A549 (cell line): ENCODE measurements at regions of chr17 and their contacts with region 1.

Region 1: GRCh38 chr17:77068915-77069314 is 71.9 kb upstream of the SEC14L1 start:
- DNase-seq: no peak
- ATAC-seq: peak in 1 of 2 experiments; percentile 21; a peak in 2 of 6 replicates
- H3K4me3 ChIP-seq: no peak overlapping the region
- H3K27ac ChIP-seq: peak overlapping the region in 1 of 2 experiments; percentile 6; a peak in 1 of 6 replicates
- H3K4me1 ChIP-seq: peaks cover 5% of the 10 kb centered on the region; the same call in 1 of the 3 replicates
- CTCF ChIP-seq: no peak
- EP300 ChIP-seq: no peak
- POLR2A ChIP-seq: no peak
- RAD21 ChIP-seq: no peak

Region 2: DNA sequence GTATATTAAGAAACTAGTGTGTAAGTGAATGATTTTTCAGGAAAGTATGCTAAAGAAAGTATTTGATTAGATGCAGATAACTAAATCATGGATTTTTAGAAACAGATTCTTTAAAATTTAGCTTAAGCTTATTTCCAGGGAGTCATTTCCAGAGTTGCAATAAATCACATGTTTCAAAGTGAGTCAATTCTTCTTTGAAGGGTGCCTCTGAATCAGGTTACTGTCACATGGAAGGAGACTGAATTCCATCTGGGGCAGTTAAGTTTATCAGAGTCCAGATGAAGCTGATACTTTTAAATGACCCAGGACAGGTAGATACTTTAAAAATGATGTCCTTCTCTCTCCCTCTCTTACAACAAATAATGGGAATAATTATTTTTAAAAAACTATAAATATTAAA is 326.0 kb before region 1 on chr17:
- CTCF ChIA-PET with region 1: interaction called, 10 read pairs
- POLR2A ChIA-PET with region 1: no interaction called
- DNase-seq: no peak
- ATAC-seq: no peak
- H3K4me3 ChIP-seq: no peak overlapping the region
- H3K27ac ChIP-seq: no peak overlapping the region
- H3K4me1 ChIP-seq: peaks cover 10% of the 10 kb centered on the region; the same call in 1 of the 3 replicates
- CTCF ChIP-seq: no peak
- EP300 ChIP-seq: no peak
- POLR2A ChIP-seq: no peak
- RAD21 ChIP-seq: no peak

Region 3: DNA sequence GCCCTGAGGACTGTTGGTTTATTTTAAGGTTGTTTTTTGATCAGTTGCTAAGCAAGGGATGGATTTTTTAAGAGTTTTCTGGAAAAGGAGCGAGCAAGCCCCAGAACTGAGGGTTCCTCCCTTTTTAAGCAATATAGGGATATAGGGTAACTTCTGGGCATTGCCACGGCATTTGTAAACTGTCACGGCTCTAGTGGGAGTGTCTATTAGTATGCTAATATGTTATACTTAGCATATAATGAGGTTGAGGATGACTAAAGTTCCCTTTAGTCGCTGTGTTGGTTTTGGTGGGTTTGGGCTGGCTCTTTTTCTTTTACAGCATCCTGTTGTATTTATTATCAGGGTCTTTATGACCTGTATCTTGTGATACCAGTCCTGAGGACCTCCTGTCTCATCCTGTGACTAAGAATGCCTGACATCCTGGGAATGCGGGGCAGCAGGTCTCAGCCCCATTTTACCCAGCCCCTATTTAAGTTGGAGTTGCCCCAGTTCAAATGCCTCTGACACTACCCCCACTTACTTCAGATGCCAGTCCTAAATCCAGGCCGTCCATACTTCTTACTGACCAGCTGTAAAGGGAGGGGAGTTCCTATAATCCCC is 271.6 kb before region 1 on chr17:
- CTCF ChIA-PET with region 1: interaction called, 12 read pairs
- POLR2A ChIA-PET with region 1: no interaction called
- DNase-seq: no peak
- ATAC-seq: no peak
- H3K4me3 ChIP-seq: no peak overlapping the region
- H3K27ac ChIP-seq: no peak overlapping the region
- H3K4me1 ChIP-seq: peaks cover 6% of the 10 kb centered on the region; the same call in 1 of the 3 replicates
- CTCF ChIP-seq: no peak
- EP300 ChIP-seq: no peak
- POLR2A ChIP-seq: no peak
- RAD21 ChIP-seq: no peak

Region 4: DNA sequence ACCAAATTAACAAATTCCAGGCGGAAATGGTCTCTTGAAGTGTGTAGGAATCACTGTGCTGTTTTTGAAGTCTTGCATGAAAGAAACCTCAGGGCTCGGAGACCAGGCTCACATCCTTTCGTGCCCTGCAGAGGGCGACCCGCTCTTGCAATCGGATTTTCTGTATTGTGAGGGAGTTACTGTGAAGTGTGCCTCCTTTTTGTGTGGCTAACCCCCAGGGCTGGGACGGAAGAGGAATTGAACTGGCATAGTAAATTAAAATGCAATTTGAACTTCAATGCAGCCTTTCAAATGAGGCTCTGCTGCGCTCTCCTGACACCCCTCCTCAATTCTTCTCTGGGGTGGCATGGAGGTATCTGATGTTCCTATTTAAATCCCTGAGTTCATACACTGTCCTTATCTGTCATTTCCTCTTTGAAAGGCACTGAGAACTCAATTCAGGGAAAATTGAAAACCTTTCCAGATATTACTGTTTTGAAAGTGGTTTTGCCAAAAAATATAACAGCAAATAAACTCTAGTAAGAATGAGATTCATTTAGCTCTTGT is 252.3 kb before region 1 on chr17:
- CTCF ChIA-PET with region 1: interaction called, 98 read pairs
- POLR2A ChIA-PET with region 1: no interaction called
- DNase-seq: peak; percentile 75 to 85
- ATAC-seq: peak; percentile 93 to 95
- H3K4me3 ChIP-seq: no peak overlapping the region
- H3K27ac ChIP-seq: no peak overlapping the region
- H3K4me1 ChIP-seq: no peaks in the 10 kb centered on the region
- CTCF ChIP-seq: peak; percentile 88
- EP300 ChIP-seq: no peak
- POLR2A ChIP-seq: no peak
- RAD21 ChIP-seq: peak; percentile 88 to 91

Region 5: DNA sequence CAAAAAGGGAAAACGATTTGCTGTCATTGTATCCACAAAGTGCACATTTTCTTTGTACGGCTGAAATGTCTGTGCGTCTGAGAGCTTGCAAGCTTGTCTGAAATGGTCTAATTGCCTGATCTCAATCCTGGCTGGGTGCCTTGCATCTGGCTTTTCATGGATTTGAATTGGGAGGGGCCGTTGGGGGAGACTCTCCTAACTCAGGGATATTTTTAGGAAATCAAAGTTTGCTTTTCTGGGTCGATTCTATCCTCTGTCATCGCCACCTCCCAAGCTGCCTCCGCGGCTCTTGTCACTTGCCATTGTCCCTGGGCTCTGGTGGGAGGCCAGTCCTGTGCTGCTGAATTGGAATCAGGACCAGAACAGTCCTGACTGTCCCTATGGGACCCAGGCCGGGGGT is 234.0 kb before region 1 on chr17:
- CTCF ChIA-PET with region 1: interaction called, 14 read pairs
- POLR2A ChIA-PET with region 1: no interaction called
- DNase-seq: no peak
- ATAC-seq: no peak
- H3K4me3 ChIP-seq: no peak overlapping the region
- H3K27ac ChIP-seq: no peak overlapping the region
- H3K4me1 ChIP-seq: no peaks in the 10 kb centered on the region; the same call in 2 of the 3 replicates
- CTCF ChIP-seq: no peak
- EP300 ChIP-seq: no peak
- POLR2A ChIP-seq: no peak
- RAD21 ChIP-seq: no peak

Region 6: GRCh38 chr17:76943781-76944213 is 125.1 kb before region 1 on chr17:
- CTCF ChIA-PET with region 1: interaction called, 10 read pairs
- POLR2A ChIA-PET with region 1: no interaction called
- DNase-seq: no peak
- ATAC-seq: no peak
- H3K4me3 ChIP-seq: no peak overlapping the region
- H3K27ac ChIP-seq: 0 out of 6 replicates have a peak overlapping the region, but pooled peaks of 1 of the 2 experiments have one; percentile 2
- H3K4me1 ChIP-seq: no peaks in the 10 kb centered on the region
- CTCF ChIP-seq: no peak
- EP300 ChIP-seq: no peak
- POLR2A ChIP-seq: no peak
- RAD21 ChIP-seq: no peak

Region 7: GRCh38 chr17:76997981-76998531 is 70.9 kb before region 1 on chr17:
- CTCF ChIA-PET with region 1: interaction called, 14 read pairs
- POLR2A ChIA-PET with region 1: no interaction called
- DNase-seq: no peak
- ATAC-seq: no peak
- H3K4me3 ChIP-seq: no peak overlapping the region
- H3K27ac ChIP-seq: peak overlapping the region; percentile 55 to 93; a peak in 5 of 6 replicates
- H3K4me1 ChIP-seq: peaks cover 36% of the 10 kb centered on the region
- CTCF ChIP-seq: no peak
- EP300 ChIP-seq: no peak
- POLR2A ChIP-seq: no peak
- RAD21 ChIP-seq: no peak